ENCODE measurements at regions of chr19 and their contacts with region 1.

Region 1: DNA sequence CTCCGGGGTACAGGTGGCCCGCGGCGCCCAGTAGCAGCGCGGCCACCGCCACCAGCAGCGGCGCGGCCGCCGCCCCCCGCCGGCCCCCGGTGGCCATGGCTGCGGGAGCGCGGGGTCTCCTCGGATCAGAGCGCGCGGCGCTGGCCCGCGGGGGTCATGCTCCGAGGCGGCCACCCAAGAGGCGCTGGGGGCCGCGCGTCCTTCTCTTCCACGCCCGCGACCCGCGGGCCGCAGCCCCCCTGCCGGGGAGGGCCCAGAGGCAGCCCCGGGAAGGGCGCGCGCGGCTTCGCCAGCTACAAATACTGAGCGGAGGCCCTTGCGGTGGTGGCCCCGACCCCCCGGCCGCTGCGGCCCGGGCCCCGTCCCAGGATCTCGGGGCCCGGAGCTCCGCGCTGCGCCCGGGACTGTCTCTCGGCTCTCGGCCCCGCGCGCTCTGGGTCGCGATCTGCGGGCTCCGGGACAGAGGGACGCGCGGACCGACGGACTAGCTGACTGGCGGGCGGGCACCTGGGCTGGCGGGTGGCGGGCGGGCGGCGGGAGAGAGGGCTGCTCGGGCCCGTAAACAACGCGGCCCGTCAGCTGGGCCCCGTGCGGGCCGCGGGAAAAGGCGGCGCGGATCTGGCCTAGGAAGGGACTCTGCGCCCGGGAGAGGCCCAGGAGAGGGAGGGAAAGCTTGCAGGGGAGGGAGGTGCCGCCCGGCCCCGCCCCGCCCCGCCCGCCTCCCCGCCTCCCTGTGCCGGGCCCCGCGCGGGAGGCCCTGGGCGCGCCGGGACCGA is at the start of gene INSR:
- DNase-seq: peak; percentile 87 to 97
- H3K4me3 ChIP-seq: peak within 1 kb of the TSS; percentile 99 to 100
- H3K27ac ChIP-seq: peak within 1 kb of the TSS; percentile 96 to 99
- H3K4me1 ChIP-seq: peaks cover 0 to 39% (median 19%) of the 10 kb centered on the region in 4 donors
- H3K27me3 ChIP-seq: no peaks in the 10 kb centered on the region
- CTCF ChIP-seq: no peak

Region 2: DNA sequence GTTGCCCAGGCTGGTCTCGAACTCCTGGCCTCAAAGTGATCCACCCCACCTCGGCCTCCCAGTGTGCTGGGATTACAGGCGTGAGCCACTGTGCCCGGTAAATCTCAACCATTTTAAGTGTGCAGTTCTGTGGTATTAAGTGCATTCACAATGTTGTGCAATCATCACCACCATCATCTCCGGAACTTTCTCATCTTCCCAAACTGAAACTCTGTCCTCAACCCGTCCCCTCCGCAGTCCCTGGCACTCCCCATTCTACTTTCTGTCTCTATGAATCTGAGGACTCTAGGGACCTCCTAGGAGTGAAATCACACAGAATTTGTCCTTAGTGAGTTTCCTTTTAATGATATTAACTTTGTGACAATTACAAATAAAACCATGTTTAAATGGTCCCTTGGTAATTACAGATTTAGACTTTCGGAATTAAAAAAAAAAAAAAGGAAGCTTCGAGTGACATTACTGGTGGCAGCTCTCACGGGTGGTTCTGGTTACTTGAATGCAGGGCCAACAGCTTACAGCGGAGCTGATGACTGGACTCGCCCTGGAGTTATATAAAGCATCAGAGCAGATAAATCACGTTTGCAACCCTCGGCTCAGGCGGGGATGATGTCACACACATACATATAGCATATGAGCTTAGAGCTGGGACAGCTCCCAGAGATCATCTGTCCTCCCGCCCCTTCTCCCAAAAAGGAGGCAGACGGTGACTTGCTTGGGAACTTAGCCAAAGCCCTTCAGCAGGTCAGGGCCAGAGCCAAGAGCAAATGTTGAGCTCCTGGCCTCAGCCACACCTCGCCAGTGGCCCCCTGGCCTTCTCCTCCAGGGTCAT is 134.7 kb before region 1 on chr19:
- intact Hi-C with region 1: loop called (anchors 5 kb)
- DNase-seq: peak; percentile 81 to 94
- H3K4me3 ChIP-seq: peak overlapping the region; percentile 9 to 25
- H3K27ac ChIP-seq: peak overlapping the region; percentile 82 to 84
- H3K4me1 ChIP-seq: peaks cover 0 to 33% (median 9%) of the 10 kb centered on the region in 4 donors
- H3K27me3 ChIP-seq: no peaks in the 10 kb centered on the region
- CTCF ChIP-seq: no peak

Region 3: GRCh38 chr19:7242601-7243258 is 51.3 kb before region 1 on chr19:
- intact Hi-C with region 1: loop called (anchors 5 kb)
- DNase-seq: peak in 1 of 2 donors; percentile 38
- H3K4me3 ChIP-seq: peak overlapping the region in 1 of 2 donors; percentile 20
- H3K27ac ChIP-seq: peak overlapping the region; percentile 83 to 85
- H3K4me1 ChIP-seq: peaks cover 0 to 58% (median 34%) of the 10 kb centered on the region in 4 donors
- H3K27me3 ChIP-seq: no peaks in the 10 kb centered on the region
- CTCF ChIP-seq: peak in 1 of 2 experiments; percentile 4

Region 4: DNA sequence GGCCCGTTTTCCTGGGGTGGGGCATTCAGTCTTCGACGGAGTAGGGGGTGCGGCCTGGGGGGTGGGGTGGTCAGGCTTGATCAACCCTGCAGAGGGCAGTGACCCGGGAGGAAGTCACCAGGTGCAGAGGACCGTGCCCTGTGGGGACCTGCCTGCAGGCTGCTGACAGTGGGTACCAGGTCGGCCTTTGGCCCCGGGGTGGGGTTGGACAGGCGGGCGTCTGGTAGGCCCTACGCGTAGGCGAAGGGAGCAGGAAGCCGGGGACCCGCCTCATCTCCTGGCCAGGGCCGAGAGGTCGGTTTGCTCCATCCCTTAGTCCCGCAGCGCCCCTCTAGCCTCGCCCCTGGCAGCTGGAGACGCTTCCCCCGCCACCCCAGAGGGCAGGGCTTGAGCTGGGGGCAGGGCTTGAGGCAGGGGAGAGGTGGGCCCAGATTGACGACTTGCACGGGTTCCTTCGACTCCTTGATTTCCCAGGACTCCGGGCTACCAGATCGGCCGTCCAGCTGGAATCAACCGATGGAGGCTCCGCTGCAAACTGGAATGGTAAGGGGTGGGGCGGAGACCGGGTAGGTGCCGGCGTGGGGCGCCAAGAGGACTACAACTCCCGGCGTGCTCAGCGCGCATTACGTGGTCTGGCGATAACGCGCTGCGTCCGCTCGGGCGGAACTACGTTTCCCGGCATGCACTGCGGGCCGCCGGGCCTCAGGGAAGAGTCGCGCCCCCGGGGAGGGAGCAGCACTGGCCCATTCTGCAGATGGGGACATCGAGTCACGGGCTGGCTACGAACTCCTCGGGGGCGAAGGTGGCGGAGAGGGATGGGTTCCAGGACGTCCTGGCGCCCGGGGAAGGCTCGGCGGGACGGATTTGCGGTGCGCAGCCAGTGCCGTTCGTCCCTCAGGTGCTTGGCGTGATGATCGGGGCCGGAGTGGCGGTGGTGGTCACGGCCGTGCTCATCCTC is 241.3 kb after region 1 on chr19 and contains the start of gene PNPLA6:
- intact Hi-C with region 1: no loop called
- DNase-seq: peak; percentile 94 to 97
- H3K4me3 ChIP-seq: peak within 1 kb of the TSS; percentile 71 to 87
- H3K27ac ChIP-seq: peak within 1 kb of the TSS; percentile 87 to 97
- H3K4me1 ChIP-seq: peaks cover 0 to 19% (median 14%) of the 10 kb centered on the region in 4 donors
- H3K27me3 ChIP-seq: no peaks in the 10 kb centered on the region
- CTCF ChIP-seq: no peak